Heart right ventricle (tissue), 16 donors: ENCODE measurements at regions of chr7 and their contacts with region 1.

Region 1: GRCh38 chr7:144519925-144520324 is 116.4 kb upstream of the NOBOX start:
- DNase-seq: no peak
- ATAC-seq: peak in 1 of 8 donors; percentile 21
- H3K4me3 ChIP-seq: no peak overlapping the region
- H3K27ac ChIP-seq: no peak overlapping the region
- H3K4me1 ChIP-seq: peaks cover 0 to 32% (median 14%) of the 10 kb centered on the region in 9 donors
- H3K27me3 ChIP-seq: no peaks in the 10 kb centered on the region
- CTCF ChIP-seq: no peak

Region 2: DNA sequence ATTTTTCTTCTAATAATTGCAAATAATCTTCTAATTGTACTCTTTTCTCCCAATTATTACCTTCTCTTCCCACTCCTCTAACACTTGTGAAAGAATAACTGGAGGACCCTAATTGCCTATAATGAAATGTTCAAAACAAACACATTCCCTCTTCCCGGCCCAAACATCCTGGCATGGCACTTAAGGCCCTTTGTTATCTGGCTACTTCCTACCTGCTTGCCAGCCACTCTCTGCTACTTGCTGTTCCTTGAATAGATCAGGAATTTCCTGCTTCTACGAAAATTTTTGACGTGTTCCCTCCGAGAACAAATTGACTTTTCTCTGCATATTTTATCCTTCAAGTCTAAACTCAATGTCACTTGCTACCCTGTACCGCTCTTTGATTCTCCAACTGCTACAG is 60.3 kb before region 1 on chr7:
- intact Hi-C with region 1: no loop called
- DNase-seq: no peak
- ATAC-seq: no peak
- H3K4me3 ChIP-seq: no peak overlapping the region
- H3K27ac ChIP-seq: no peak overlapping the region
- H3K4me1 ChIP-seq: no peaks in the 10 kb centered on the region
- H3K27me3 ChIP-seq: no peaks in the 10 kb centered on the region
- CTCF ChIP-seq: no peak

Region 3: GRCh38 chr7:144842377-144842851 is 322.5 kb after region 1 on chr7:
- intact Hi-C with region 1: loop called in 1 of 10 experiments (anchors 5 kb)
- DNase-seq: peak in 1 of 2 donors; percentile 39
- ATAC-seq: peak; percentile 64 to 90 (median 73)
- H3K4me3 ChIP-seq: no peak overlapping the region
- H3K27ac ChIP-seq: peak overlapping the region in 9 of 10 donors; percentile 3 to 87 (median 52)
- H3K4me1 ChIP-seq: peaks cover 0 to 18% (median 4%) of the 10 kb centered on the region in 9 donors
- H3K27me3 ChIP-seq: peaks cover 0 to 4% (median 0%) of the 10 kb centered on the region in 7 donors
- CTCF ChIP-seq: no peak